ENCODE measurements at regions of chr20 and their contacts with region 1.

Region 1: GRCh38 chr20:53718142-53719021 is 124.7 kb upstream of the ZNF217 start:
- DNase-seq: no peak
- H3K4me3 ChIP-seq: no peak overlapping the region
- H3K4me3 Mint-ChIP-seq: no peak overlapping the region
- H3K27ac Mint-ChIP-seq: peak overlapping the region; percentile 19
- H3K4me1 ChIP-seq: peaks cover 6% of the 10 kb centered on the region
- H3K4me1 Mint-ChIP-seq: peaks cover 26% of the 10 kb centered on the region
- H3K27me3 ChIP-seq: no peaks in the 10 kb centered on the region
- H3K27me3 Mint-ChIP-seq: no peaks in the 10 kb centered on the region
- CTCF ChIP-seq: no peak

Region 2: DNA sequence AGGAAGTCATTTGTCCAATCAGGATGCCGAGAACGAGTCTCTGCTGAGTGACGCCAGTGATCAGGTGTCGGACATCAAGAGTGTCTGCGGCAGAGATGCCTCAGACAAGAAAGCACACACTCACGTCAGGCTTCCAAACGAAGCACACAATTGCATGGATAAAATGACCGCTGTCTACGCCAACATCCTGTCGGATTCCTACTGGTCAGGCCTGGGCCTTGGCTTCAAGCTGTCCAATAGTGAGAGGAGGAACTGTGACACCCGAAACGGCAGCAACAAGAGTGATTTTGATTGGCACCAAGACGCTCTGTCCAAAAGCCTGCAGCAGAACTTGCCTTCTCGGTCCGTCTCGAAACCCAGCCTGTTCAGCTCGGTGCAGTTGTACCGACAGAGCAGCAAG is 464.7 kb before region 1 on chr20:
- CTCF ChIA-PET with region 1: no interaction called
- POLR2A ChIA-PET with region 1: no interaction called
- intact Hi-C with region 1: loop called (anchors 5 kb)
- DNase-seq: no peak
- H3K4me3 ChIP-seq: no peak overlapping the region
- H3K4me3 Mint-ChIP-seq: no peak overlapping the region
- H3K27ac Mint-ChIP-seq: no peak overlapping the region
- H3K4me1 ChIP-seq: peaks cover 12% of the 10 kb centered on the region; the same call in 1 of the 2 replicates
- H3K4me1 Mint-ChIP-seq: peaks cover 1% of the 10 kb centered on the region
- H3K27me3 ChIP-seq: no peaks in the 10 kb centered on the region
- H3K27me3 Mint-ChIP-seq: peaks cover 6% of the 10 kb centered on the region
- CTCF ChIP-seq: no peak

Region 3: DNA sequence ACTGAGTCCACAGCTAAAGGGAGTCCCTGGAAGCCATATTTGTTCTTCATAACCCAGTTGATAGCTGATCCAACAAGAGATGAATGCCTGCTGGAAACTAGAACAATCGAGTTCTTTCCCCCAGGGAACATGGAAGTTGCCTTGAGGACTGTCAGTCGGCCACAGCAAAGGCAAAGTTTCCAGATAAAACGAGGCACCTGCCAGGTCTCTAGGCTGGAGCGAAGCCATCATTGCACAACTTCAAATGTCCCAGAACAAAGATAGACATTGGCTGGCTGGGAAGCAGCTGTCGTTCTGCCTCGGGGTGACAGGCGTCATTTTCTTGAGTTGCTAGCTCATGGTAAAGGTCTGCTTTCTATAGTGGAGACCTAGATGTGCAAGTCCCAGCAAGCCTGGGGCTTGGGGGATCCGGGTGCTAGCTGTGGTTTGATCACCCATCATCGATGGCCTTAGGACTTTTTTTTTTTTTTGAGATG is 59.7 kb after region 1 on chr20:
- CTCF ChIA-PET with region 1: no interaction called
- POLR2A ChIA-PET with region 1: no interaction called
- intact Hi-C with region 1: no loop called
- DNase-seq: peak in 1 of 2 experiments; percentile 68
- H3K4me3 ChIP-seq: no peak overlapping the region
- H3K4me3 Mint-ChIP-seq: no peak overlapping the region
- H3K27ac Mint-ChIP-seq: peak overlapping the region; percentile 19
- H3K4me1 ChIP-seq: peaks cover 35% of the 10 kb centered on the region
- H3K4me1 Mint-ChIP-seq: peaks cover 47% of the 10 kb centered on the region
- H3K27me3 ChIP-seq: no peaks in the 10 kb centered on the region
- H3K27me3 Mint-ChIP-seq: no peaks in the 10 kb centered on the region
- CTCF ChIP-seq: no peak